ENCODE measurements at regions of chr12 and their contacts with region 1.

Region 1: GRCh38 chr12:2179953-2180736 is 127.4 kb downstream of the CACNA1C start:
- DNase-seq: peak; percentile 62
- H3K4me3 ChIP-seq: no peak overlapping the region
- H3K27ac ChIP-seq: peak overlapping the region; percentile 73 to 87 (median 78)
- H3K4me1 ChIP-seq: peaks cover 11 to 26% (median 18%) of the 10 kb centered on the region in 4 donors
- H3K27me3 ChIP-seq: no peaks in the 10 kb centered on the region
- CTCF ChIP-seq: no peak
- EP300 ChIP-seq: peak; percentile 56
- POLR2A ChIP-seq: no peak

Region 2: DNA sequence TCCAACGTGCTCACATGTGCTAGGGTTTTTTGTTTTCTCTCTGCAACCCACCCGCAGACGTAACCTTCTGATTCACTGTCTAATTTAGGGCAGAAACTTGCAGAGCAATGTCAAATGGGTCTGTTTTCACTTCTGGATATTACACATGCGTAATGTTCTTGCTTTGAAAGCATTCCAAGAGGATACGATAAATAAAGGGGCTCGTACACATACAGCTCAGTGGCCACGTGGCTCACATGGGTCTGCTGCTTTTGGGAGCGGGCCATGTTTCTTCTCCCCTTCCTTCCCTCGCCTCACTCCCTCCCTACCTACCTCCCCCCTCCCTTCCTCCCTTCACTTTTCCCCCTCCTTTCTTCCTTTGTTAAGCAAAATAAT is 104.0 kb before region 1 on chr12:
- in situ Hi-C with region 1: no loop called
- intact Hi-C with region 1: loop called (anchors 10 kb)
- DNase-seq: no peak
- H3K4me3 ChIP-seq: no peak overlapping the region
- H3K27ac ChIP-seq: peak overlapping the region; percentile 74 to 89 (median 79)
- H3K4me1 ChIP-seq: peaks cover 0 to 14% (median 1%) of the 10 kb centered on the region in 4 donors
- H3K27me3 ChIP-seq: no peaks in the 10 kb centered on the region
- CTCF ChIP-seq: no peak
- EP300 ChIP-seq: no peak
- POLR2A ChIP-seq: no peak

Region 3: DNA sequence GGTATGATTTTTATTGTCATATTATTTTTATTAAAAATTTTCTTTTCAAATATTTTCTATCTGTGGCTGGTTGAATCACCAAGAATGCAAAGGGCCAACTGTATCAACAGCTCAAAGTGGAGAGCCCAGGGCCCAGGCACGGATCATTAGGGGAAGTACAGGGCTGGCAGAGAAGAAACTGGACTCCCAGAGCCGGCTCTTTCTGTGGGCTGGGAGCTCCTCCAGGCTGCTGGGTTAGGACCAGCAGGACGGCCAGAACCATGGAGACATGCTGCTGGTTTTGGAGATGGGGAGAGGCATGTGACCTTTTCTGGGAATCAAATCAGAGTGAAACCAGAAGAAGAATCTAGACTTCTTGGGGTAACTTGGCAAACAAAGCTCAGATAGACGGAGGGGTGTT is 93.1 kb after region 1 on chr12:
- in situ Hi-C with region 1: no loop called
- intact Hi-C with region 1: loop called (anchors 10 kb)
- DNase-seq: no peak
- H3K4me3 ChIP-seq: no peak overlapping the region
- H3K27ac ChIP-seq: peak overlapping the region; percentile 11 to 78 (median 28)
- H3K4me1 ChIP-seq: peaks cover 9 to 24% (median 20%) of the 10 kb centered on the region in 4 donors
- H3K27me3 ChIP-seq: no peaks in the 10 kb centered on the region
- CTCF ChIP-seq: peak in 1 of 5 experiments; percentile 19
- EP300 ChIP-seq: no peak
- POLR2A ChIP-seq: no peak

Measured in transverse colon (tissue), 4 donors.